ENCODE measurements at regions of chr14 and their contacts with region 1.

Region 1: GRCh38 chr14:24080888-24081738 is 9.8 kb downstream of the CPNE6 start:
- DNase-seq: peak; percentile 69
- ATAC-seq: peak; percentile 88

Region 2: GRCh38 chr14:23984891-23985602 is 96.1 kb before region 1 on chr14:
- intact Hi-C with region 1: loop called (anchors 10 kb)
- DNase-seq: no peak
- ATAC-seq: peak; percentile 64

Region 3: GRCh38 chr14:24195191-24196070 is 114.3 kb after region 1 on chr14 and contains the start of gene TM9SF1:
- intact Hi-C with region 1: no loop called
- DNase-seq: peak; percentile 94
- ATAC-seq: peak; percentile 98
- total RNA-seq, gene TM9SF1: 19.2 TPM